ENCODE measurements at regions of chr12 and their contacts with region 1.

Region 1: DNA sequence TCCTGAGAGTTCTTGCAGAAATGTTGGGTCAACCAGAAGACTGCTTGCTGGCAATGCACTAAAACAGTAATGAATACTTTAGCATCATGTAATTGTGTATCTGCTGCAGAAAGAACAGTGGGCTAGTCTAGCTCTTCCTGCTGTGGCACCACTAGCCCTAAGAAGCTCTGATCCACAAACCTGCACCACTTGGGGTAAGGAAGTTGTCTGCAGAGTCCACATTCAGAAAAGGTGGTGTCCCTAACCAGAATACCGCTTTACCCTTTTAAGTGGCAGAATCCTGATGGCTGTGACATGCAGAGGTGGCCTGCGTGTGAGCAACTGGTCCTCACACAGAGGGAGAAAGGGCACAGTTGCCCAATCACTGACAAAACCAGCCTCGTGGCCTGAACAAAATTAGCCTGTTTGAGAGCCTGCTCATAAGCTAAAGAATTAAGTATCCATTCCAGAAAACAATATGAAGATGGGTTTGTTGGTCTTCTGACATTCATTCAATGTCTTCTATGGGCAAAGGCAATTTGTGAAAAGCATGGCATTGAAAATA is 165.8 kb downstream of the PPM1H start:
- DNase-seq: no peak
- H3K4me3 ChIP-seq: no peak overlapping the region
- H3K27ac ChIP-seq: no peak overlapping the region
- H3K4me1 ChIP-seq: peaks cover 0 to 4% (median 0%) of the 10 kb centered on the region in 4 donors
- H3K27me3 ChIP-seq: no peaks in the 10 kb centered on the region
- CTCF ChIP-seq: no peak
- EP300 ChIP-seq: no peak
- POLR2A ChIP-seq: no peak

Region 2: DNA sequence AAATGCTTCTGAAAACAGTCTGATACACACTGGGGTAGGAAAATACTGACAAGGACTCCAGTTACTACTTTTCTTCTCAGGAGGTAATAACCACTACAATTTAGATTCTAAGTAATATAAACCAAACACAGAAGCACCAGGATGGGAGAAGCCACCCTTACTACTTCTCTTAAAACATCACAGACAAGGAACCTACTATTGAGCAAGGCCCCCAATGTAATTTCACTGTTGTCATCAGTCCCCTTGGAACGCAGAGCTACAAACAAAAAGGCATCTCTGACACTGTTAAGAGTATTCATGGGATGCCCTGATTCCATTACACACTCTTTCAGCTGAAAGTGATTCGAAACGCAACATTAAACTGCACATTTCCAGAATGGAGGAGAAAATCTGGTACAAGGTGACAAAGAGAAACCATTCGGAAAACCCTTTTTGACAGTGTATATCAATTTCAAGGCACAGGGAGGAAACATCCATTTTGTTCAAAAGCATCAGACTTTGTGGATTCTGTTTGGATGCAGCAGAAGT is 20.1 kb before region 1 on chr12:
- intact Hi-C with region 1: loop called (anchors 1 kb)
- DNase-seq: no peak
- H3K4me3 ChIP-seq: no peak overlapping the region
- H3K27ac ChIP-seq: no peak overlapping the region
- H3K4me1 ChIP-seq: no peaks in the 10 kb centered on the region
- H3K27me3 ChIP-seq: no peaks in the 10 kb centered on the region
- CTCF ChIP-seq: no peak
- EP300 ChIP-seq: no peak
- POLR2A ChIP-seq: no peak

Region 3: GRCh38 chr12:62827042-62827441 is 57.9 kb after region 1 on chr12:
- intact Hi-C with region 1: no loop called
- DNase-seq: no peak
- H3K4me3 ChIP-seq: no peak overlapping the region
- H3K27ac ChIP-seq: no peak overlapping the region
- H3K4me1 ChIP-seq: no peaks in the 10 kb centered on the region
- H3K27me3 ChIP-seq: no peaks in the 10 kb centered on the region
- CTCF ChIP-seq: no peak
- EP300 ChIP-seq: no peak
- POLR2A ChIP-seq: no peak

Measured in sigmoid colon (tissue), 7 donors.